Right cardiac atrium (tissue), 5 donors: ENCODE measurements at regions of chr11 and their contacts with region 1.

Region 1: DNA sequence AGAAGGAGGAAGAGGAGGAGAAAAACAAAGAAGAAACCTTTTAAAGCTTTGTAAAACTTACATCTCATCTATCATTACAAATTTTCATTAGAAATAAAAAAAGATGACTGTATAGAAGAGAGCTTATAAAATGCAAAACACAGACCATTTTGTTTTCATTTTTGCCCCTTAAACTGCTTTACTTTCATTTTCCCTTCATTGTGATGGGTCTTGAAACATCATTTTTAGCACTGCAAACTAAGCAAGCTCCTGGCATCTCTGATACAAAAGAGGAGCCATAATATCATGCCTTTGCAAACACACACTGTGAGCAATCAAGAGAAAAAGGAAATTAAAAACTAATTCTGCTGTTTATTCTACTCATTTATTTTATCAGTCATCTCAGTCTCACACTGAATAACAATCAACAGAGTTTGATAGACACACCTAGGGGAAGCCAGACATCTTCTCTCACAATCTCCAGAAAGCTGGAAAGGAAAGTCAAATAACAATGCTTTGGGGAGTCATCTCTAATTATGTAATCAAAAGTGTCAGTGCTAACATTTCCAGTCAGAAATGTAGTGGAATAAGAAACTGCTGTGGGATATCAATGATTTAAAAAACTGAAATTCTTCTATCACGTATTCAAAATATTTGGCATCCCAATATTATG is 467.7 kb upstream of the FAT3 start:
- DNase-seq: no peak
- ATAC-seq: no peak
- H3K4me3 ChIP-seq: no peak overlapping the region
- H3K27ac ChIP-seq: no peak overlapping the region
- H3K4me1 ChIP-seq: no peaks in the 10 kb centered on the region
- H3K27me3 ChIP-seq: no peaks in the 10 kb centered on the region

Region 2: DNA sequence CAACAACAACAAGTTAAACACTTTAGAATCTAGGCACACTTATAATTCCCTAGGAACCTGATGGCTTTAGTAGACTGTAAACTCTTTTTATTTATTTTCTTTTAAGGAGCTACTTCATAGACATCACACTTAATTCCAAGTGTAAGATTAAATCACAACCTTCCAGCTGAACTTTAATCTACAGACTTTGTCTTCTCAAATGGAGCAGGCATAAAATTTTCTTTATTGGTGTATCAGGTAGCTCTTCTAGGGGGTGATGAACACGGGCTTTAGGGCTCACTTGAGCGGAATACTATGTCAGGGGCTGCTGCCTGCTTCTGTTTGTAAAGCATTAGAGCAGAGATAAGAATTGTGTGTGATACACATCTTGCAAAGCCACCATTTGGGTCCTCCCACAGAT is 58.1 kb before region 1 on chr11:
- intact Hi-C with region 1: loop called in 1 of 4 experiments (anchors 10 kb)
- DNase-seq: no peak
- ATAC-seq: no peak
- H3K4me3 ChIP-seq: no peak overlapping the region
- H3K27ac ChIP-seq: no peak overlapping the region
- H3K4me1 ChIP-seq: no peaks in the 10 kb centered on the region
- H3K27me3 ChIP-seq: no peaks in the 10 kb centered on the region

Region 3: GRCh38 chr11:91850533-91851275 is 93.7 kb after region 1 on chr11:
- intact Hi-C with region 1: no loop called
- DNase-seq: no peak
- ATAC-seq: no peak
- H3K4me3 ChIP-seq: no peak overlapping the region
- H3K27ac ChIP-seq: no peak overlapping the region
- H3K4me1 ChIP-seq: no peaks in the 10 kb centered on the region
- H3K27me3 ChIP-seq: no peaks in the 10 kb centered on the region